Colonic mucosa (tissue), 4 donors: ENCODE measurements at regions of chr11 and their contacts with region 1.

Region 1: DNA sequence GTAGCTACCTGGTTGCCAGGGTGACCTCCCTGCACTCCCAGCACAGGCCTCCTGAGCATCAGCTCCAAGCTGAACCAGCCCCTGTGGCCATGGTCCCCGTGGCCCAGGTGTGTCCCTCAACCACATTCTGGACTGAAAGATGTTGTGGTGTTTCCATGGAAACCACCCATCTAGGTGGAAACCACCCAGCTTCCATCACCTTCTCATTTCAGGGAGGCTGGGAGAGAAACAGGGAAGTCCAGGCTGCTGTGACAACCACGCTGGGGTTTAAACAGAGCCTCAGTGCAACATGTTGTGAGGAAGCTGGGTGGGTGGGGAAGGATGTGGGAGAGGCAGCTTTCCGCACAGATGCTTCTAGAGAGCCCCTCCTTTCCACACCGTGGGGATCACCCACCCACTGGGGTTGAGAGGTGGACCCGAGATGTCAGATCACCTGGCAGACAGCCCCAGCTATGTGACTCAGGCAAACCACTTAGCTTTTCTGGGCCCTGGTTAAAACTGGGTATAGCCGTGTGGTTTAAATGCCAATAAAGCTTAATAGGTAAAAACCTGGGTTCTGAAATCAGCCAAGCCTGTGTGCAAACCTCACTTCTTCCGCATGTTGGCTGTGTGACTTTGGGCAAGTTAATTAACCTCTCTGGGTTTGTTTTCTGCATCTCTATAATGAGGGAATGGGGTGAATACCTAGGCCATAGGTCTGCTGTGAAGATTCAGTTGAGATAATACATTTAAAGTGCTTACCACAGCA is 46.4 kb downstream of the CD82 start:
- DNase-seq: no peak
- H3K4me3 ChIP-seq: no peak overlapping the region
- H3K27ac ChIP-seq: no peak overlapping the region
- H3K4me1 ChIP-seq: no peaks in the 10 kb centered on the region
- H3K27me3 ChIP-seq: no peaks in the 10 kb centered on the region
- CTCF ChIP-seq: no peak

Region 2: DNA sequence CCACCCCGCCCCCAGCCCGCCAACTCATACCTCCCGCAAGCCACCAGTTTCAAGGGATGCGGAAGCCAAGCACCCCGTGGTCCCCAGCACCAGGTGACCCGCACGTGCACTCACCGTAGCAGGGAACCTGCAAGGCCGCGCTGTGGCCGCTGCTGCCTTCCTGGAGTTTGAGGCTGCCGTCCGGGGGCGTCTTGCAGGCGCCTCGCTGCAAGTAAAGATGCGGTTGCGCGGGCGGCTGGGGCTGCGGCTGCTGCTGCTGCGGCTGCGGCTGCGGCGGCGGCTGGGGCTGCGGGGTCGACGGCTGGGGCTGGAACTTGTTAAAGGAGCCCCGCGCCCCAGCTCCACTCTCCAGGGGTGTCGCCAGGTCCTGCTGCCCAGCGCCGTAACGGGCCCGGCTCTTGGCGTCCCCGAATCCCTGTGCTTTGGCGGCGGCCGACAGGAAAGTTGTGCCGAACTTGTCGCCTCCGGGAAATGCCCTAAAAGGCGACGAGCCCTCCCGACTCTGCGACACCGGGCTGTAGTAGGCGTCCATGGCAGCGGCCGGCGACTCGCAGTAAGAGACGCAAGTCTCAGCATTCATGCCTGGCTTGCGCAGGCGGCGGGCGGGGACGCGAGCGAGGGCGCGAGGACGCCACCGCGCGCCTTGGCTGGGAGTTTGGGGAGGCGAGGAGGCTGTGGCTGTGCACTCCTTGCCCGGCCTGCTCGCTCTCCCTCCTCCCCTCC is 302.2 kb before region 1 on chr11 and contains the start of gene ALX4:
- intact Hi-C with region 1: loop called (anchors 10 kb)
- DNase-seq: no peak
- H3K4me3 ChIP-seq: peak within 1 kb of the TSS; percentile 3
- H3K27ac ChIP-seq: no peak within 1 kb of the TSS
- H3K4me1 ChIP-seq: peaks cover 3% of the 10 kb centered on the region
- H3K27me3 ChIP-seq: peaks cover 97% of the 10 kb centered on the region
- CTCF ChIP-seq: no peak
- total RNA-seq, gene ALX4: not detected